Prostate gland (tissue), 2 donors: ENCODE measurements at regions of chr2 and their contacts with region 1.

Region 1: DNA sequence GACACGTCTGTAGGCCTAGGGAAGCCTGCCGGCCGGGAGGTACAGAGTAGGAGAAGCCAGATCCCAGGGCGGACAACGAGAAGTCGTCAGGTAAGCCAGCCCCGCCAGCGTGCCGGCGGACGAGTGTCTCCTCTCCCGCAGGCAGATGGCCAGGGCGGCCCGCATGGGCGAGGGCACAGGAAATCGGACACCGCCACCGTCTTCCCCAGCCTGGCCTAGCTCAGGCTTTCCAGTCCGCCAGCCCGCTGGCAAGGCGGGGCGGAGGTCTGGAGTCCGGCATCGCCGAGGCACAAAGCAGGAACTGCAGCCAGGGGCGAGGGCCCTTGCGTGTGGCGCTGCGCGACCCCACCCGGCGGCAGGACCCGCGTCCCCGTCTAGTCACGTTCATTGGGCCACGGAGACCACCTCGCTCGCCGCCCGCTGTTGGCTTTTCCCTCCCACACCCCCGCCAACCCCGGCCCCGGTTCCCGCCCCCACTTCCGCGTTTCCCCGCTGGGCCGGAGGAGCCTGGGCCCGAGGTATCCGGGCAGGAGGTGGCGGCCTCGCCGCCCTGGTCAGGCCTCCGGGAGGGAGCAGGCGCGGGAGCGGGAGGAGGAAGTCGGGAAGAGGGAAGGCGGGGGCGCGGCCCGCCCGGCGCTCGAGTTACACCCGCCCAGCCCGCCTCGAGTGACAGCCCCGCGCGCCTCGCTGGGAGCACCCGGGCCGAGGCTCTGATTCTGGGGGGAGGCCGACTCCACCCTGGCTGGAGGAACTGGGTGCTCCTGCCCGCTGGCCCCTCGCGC is at the start of gene GPD2:
- DNase-seq: peak; percentile 93
- H3K4me3 ChIP-seq: peak within 1 kb of the TSS; percentile 61 to 68
- H3K27ac ChIP-seq: peak within 1 kb of the TSS; percentile 97 to 99
- H3K4me1 ChIP-seq: no peaks in the 10 kb centered on the region
- H3K27me3 ChIP-seq: no peaks in the 10 kb centered on the region
- CTCF ChIP-seq: peak in 1 of 4 experiments; percentile 1
- POLR2A ChIP-seq: peak; percentile 83
- total RNA-seq, gene GPD2: 26.6 to 95.3 TPM

Region 2: GRCh38 chr2:156134887-156135286 is 301.0 kb before region 1 on chr2:
- intact Hi-C with region 1: no loop called
- DNase-seq: no peak
- H3K4me3 ChIP-seq: no peak overlapping the region
- H3K27ac ChIP-seq: no peak overlapping the region
- H3K4me1 ChIP-seq: no peaks in the 10 kb centered on the region
- H3K27me3 ChIP-seq: no peaks in the 10 kb centered on the region
- CTCF ChIP-seq: no peak
- POLR2A ChIP-seq: no peak

Region 3: DNA sequence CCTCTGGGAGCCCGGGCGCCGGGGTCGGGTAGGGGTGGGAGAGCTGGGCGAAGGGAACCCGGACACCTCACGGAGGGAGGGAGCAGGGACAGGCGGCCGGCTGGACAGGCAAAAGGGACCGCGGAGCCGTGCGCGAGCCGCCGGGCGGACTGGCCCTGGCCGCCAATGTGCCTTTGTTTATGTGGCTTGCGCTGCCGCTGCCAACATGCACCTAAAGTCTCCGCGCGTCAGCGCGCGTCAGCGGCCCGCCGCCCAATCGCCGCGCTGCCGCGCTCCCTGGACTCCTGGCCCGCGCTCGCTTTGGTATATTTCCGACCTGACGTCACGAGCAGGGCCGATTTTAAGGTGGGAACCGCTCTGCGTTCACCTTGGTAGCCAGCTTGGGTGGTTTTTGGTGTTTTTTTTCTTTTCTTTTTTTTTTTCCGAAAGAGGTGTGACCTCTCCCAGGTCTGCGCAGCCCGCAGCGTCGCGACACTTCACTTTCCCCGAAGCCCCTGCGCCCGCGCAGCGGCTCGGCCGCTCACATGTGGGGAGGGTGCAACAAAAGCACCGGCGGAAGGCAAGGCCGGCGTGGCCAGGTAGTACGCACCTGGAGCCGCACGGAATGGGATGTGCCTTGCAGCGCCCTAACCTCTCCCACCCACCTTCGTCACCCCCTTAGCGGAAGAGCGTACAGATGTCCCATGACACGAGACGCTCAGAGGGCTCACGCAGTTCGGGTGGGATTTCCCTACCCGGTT is 103.2 kb before region 1 on chr2 and contains the start of gene NR4A2:
- intact Hi-C with region 1: loop called (anchors 5 kb)
- DNase-seq: peak; percentile 93
- H3K4me3 ChIP-seq: peak within 1 kb of the TSS; percentile 84 to 88
- H3K27ac ChIP-seq: peak within 1 kb of the TSS; percentile 99
- H3K4me1 ChIP-seq: no peaks in the 10 kb centered on the region
- H3K27me3 ChIP-seq: no peaks in the 10 kb centered on the region
- CTCF ChIP-seq: peak in 2 of 4 experiments; percentile 6
- POLR2A ChIP-seq: peak; percentile 98
- total RNA-seq, gene NR4A2: 2.3 to 4.5 TPM

Region 4: GRCh38 chr2:156400706-156401678 is 34.9 kb before region 1 on chr2:
- intact Hi-C with region 1: loop called (anchors 2 kb)
- DNase-seq: peak; percentile 80
- H3K4me3 ChIP-seq: peak overlapping the region; percentile 48 to 56
- H3K27ac ChIP-seq: peak overlapping the region; percentile 93 to 94
- H3K4me1 ChIP-seq: no peaks in the 10 kb centered on the region
- H3K27me3 ChIP-seq: no peaks in the 10 kb centered on the region
- CTCF ChIP-seq: peak in 1 of 4 experiments; percentile 4
- POLR2A ChIP-seq: no peak

Region 5: GRCh38 chr2:156526950-156527636 is 91.2 kb after region 1 on chr2:
- intact Hi-C with region 1: no loop called
- DNase-seq: no peak
- H3K4me3 ChIP-seq: no peak overlapping the region
- H3K27ac ChIP-seq: no peak overlapping the region
- H3K4me1 ChIP-seq: no peaks in the 10 kb centered on the region
- H3K27me3 ChIP-seq: no peaks in the 10 kb centered on the region
- CTCF ChIP-seq: no peak
- POLR2A ChIP-seq: no peak

Region 6: DNA sequence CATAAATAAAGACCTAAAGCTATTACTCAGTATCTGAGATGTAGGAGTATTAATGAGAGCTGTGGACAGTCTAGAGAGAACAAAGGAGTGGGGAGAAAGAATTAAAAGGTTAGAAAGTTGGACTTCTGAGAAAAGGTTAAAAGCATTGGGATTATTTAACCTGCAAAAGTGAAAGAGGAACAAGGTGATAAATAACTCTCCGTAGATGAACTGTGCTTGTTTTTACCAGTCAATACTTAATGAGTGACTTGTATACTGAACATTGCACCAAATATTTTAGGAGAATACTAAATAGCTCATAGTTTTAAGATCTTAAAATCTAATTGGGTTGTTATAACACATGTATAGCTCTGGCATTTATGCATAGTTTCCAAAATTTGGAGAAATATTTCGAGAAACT is 137.8 kb after region 1 on chr2:
- intact Hi-C with region 1: loop called (anchors 10 kb)
- DNase-seq: no peak
- H3K4me3 ChIP-seq: no peak overlapping the region
- H3K27ac ChIP-seq: no peak overlapping the region
- H3K4me1 ChIP-seq: no peaks in the 10 kb centered on the region
- H3K27me3 ChIP-seq: no peaks in the 10 kb centered on the region
- CTCF ChIP-seq: no peak
- POLR2A ChIP-seq: no peak